IMR-90 (cell line): ENCODE measurements at regions of chr4 and their contacts with region 1.

Region 1: GRCh38 chr4:4488405-4489404 is 53.1 kb downstream of the STX18 start:
- DNase-seq: peak; percentile 83
- ATAC-seq: peak; percentile 92
- H3K4me3 ChIP-seq: no peak overlapping the region
- H3K27ac ChIP-seq: no peak overlapping the region
- H3K4me1 ChIP-seq: 0 out of 2 replicates have a peak, but pooled peaks cover 2% of the 10 kb centered on the region
- H3K27me3 ChIP-seq: no peaks in the 10 kb centered on the region
- CTCF ChIP-seq: peak; percentile 91
- POLR2A ChIP-seq: no peak
- RAD21 ChIP-seq: peak; percentile 93

Region 2: GRCh38 chr4:4386736-4387392 is 101.8 kb before region 1 on chr4 and contains the start of gene NSG1:
- CTCF ChIA-PET with region 1: no interaction called
- POLR2A ChIA-PET with region 1: no interaction called
- dilution Hi-C with region 1: no loop called
- in situ Hi-C with region 1: no loop called
- intact Hi-C with region 1: no loop called
- DNase-seq: peak; percentile 18
- ATAC-seq: peak; percentile 79
- H3K4me3 ChIP-seq: peak within 1 kb of the TSS; percentile 59
- H3K27ac ChIP-seq: no peak within 1 kb of the TSS; the same call in 1 of the 2 replicates
- H3K4me1 ChIP-seq: peaks cover 4% of the 10 kb centered on the region; the same call in 1 of the 2 replicates
- H3K27me3 ChIP-seq: peaks cover 81% of the 10 kb centered on the region
- CTCF ChIP-seq: no peak
- POLR2A ChIP-seq: no peak
- RAD21 ChIP-seq: no peak
- total RNA-seq, gene NSG1: 0.56 and 0.72 TPM in 2 replicates

Region 3: GRCh38 chr4:4625478-4625877 is 136.8 kb after region 1 on chr4:
- CTCF ChIA-PET with region 1: no interaction called
- POLR2A ChIA-PET with region 1: no interaction called
- dilution Hi-C with region 1: no loop called
- in situ Hi-C with region 1: no loop called
- intact Hi-C with region 1: no loop called
- DNase-seq: peak; percentile 84
- ATAC-seq: peak; percentile 82
- H3K4me3 ChIP-seq: no peak overlapping the region
- H3K27ac ChIP-seq: no peak overlapping the region
- H3K4me1 ChIP-seq: peaks cover 1% of the 10 kb centered on the region; the same call in 1 of the 2 replicates
- H3K27me3 ChIP-seq: no peaks in the 10 kb centered on the region
- CTCF ChIP-seq: no peak
- POLR2A ChIP-seq: no peak
- RAD21 ChIP-seq: no peak

Region 4: DNA sequence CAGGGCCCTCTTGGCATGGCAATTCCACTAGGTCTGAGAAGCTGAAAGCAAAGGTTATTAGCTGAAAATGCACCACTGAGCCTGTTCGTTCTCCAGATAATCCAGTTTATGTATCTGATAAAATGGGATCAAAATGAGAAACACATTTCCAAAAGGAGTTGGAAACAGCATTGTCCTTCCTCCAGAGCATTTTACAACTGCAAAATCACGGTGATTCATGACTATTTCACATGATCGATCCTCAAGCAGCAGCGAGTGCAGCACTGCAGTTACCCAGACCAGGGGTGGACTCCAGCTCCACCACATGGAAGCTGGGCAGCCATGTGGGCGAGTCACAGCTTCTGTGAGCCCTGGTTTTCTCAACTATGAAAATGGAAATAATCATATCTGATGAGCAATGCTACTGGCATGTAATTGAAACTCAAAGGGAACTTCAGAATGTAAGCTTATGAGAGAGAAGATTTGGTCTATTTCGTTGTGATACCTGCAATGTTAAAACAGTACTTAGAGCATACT is 292.1 kb after region 1 on chr4:
- CTCF ChIA-PET with region 1: no interaction called
- POLR2A ChIA-PET with region 1: no interaction called
- dilution Hi-C with region 1: no loop called
- in situ Hi-C with region 1: no loop called
- intact Hi-C with region 1: loop called (anchors 2 kb)
- DNase-seq: peak; percentile 88
- ATAC-seq: peak; percentile 88
- H3K4me3 ChIP-seq: no peak overlapping the region
- H3K27ac ChIP-seq: no peak overlapping the region
- H3K4me1 ChIP-seq: peaks cover 3% of the 10 kb centered on the region; the same call in 1 of the 2 replicates
- H3K27me3 ChIP-seq: peaks cover 1% of the 10 kb centered on the region
- CTCF ChIP-seq: peak; percentile 32
- POLR2A ChIP-seq: no peak
- RAD21 ChIP-seq: peak; percentile 46

Region 5: DNA sequence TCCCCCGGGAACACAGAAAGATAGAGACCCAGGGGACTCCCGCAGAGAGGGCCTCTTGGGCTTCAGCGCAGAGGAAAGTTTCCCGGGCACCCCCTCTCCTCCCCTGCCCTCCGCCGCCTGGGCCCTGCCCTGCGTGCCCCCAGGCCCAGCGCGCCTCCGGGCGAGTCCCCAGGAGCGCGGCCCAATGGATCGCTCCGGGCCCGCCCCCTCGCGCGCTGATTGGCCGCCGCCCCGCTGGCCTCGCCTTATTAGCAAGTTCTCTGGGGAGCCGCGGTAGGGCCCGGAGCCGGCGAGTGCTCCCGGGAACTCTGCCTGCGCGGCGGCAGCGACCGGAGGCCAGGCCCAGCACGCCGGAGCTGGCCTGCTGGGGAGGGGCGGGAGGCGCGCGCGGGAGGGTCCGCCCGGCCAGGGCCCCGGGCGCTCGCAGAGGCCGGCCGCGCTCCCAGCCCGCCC is 370.7 kb after region 1 on chr4 and contains the start of gene MSX1:
- CTCF ChIA-PET with region 1: no interaction called
- POLR2A ChIA-PET with region 1: no interaction called
- dilution Hi-C with region 1: no loop called
- in situ Hi-C with region 1: no loop called
- intact Hi-C with region 1: loop called (anchors 2 kb)
- DNase-seq: peak; percentile 75
- ATAC-seq: peak; percentile 95
- H3K4me3 ChIP-seq: peak within 1 kb of the TSS; percentile 66
- H3K27ac ChIP-seq: no peak within 1 kb of the TSS; the same call in 1 of the 2 replicates
- H3K4me1 ChIP-seq: no peaks in the 10 kb centered on the region; the same call in 1 of the 2 replicates
- H3K27me3 ChIP-seq: peaks cover 37% of the 10 kb centered on the region
- CTCF ChIP-seq: no peak
- POLR2A ChIP-seq: peak; percentile 94
- RAD21 ChIP-seq: no peak
- total RNA-seq, gene MSX1: 1.1 TPM in 2 replicates

Region 6: GRCh38 chr4:4867375-4868039 is 378.8 kb after region 1 on chr4:
- CTCF ChIA-PET with region 1: no interaction called
- POLR2A ChIA-PET with region 1: no interaction called
- dilution Hi-C with region 1: no loop called
- in situ Hi-C with region 1: loop called (anchors 5 kb)
- intact Hi-C with region 1: no loop called
- DNase-seq: no peak
- ATAC-seq: no peak
- H3K4me3 ChIP-seq: no peak overlapping the region
- H3K27ac ChIP-seq: no peak overlapping the region
- H3K4me1 ChIP-seq: no peaks in the 10 kb centered on the region
- H3K27me3 ChIP-seq: peaks cover 83% of the 10 kb centered on the region
- CTCF ChIP-seq: no peak
- POLR2A ChIP-seq: no peak
- RAD21 ChIP-seq: no peak

Region 7: DNA sequence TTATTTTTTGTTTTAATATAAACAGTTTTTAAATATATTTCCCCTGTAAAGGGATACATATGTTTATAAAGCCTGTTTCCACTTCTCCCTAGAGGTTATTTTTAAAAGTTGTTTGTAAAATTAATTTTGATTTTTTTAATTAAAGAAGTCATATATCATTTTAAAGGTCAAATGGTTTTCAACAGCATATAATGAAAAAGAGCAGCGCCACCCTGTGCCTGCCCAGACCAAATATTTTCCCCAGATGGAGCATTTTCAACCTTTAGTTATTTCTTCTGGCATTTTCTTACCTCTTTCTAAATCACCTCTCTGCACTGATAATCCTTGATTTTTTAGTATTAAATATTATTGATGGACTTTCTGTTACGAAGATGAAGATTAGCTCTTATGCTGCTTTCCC is 391.8 kb after region 1 on chr4:
- CTCF ChIA-PET with region 1: interaction called, 3 read pairs
- POLR2A ChIA-PET with region 1: no interaction called
- dilution Hi-C with region 1: no loop called
- in situ Hi-C with region 1: no loop called
- intact Hi-C with region 1: loop called (anchors 1 kb)
- DNase-seq: no peak
- ATAC-seq: no peak
- H3K4me3 ChIP-seq: no peak overlapping the region
- H3K27ac ChIP-seq: no peak overlapping the region
- H3K4me1 ChIP-seq: no peaks in the 10 kb centered on the region
- H3K27me3 ChIP-seq: peaks cover 35% of the 10 kb centered on the region
- CTCF ChIP-seq: peak; percentile 52
- POLR2A ChIP-seq: no peak
- RAD21 ChIP-seq: peak; percentile 49